ENCODE measurements at regions of chr11 and their contacts with region 1.

Region 1: GRCh38 chr11:13335319-13335718 is 57.7 kb downstream of the BMAL1 start:
- DNase-seq: peak; percentile 88
- ATAC-seq: peak; percentile 34
- H3K4me3 Mint-ChIP-seq: no peak overlapping the region
- H3K27ac Mint-ChIP-seq: peak overlapping the region; percentile 1
- H3K4me1 Mint-ChIP-seq: peaks cover 73% of the 10 kb centered on the region
- H3K27me3 Mint-ChIP-seq: no peaks in the 10 kb centered on the region
- CTCF ChIP-seq: peak; percentile 76

Region 2: DNA sequence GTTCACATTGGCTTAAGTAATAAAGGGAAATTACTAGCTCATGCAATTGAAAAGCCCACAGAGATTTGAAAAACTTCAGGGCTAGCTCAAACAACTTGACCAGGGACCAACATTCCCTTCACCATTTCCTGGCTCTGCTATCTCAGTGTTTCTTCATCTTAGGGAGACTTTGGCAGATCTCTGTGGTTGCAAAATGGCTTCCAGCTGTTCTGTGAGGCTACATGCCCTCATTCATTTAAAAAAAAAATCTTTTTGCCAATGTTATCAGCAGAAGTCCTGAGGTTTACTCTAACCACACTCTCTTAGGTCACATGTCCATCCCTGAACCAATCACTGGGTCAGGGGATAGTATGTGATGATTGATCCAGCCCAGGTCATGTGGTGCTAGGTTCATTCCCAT is 340.1 kb before region 1 on chr11:
- CTCF ChIA-PET with region 1: no interaction called
- POLR2A ChIA-PET with region 1: no interaction called
- intact Hi-C with region 1: no loop called
- DNase-seq: no peak
- ATAC-seq: no peak
- H3K4me3 Mint-ChIP-seq: no peak overlapping the region
- H3K27ac Mint-ChIP-seq: no peak overlapping the region
- H3K4me1 Mint-ChIP-seq: no peaks in the 10 kb centered on the region
- H3K27me3 Mint-ChIP-seq: peaks cover 25% of the 10 kb centered on the region
- CTCF ChIP-seq: no peak

Region 3: GRCh38 chr11:13210424-13210823 is 124.9 kb before region 1 on chr11:
- CTCF ChIA-PET with region 1: interaction called, 55 read pairs
- POLR2A ChIA-PET with region 1: interaction called, 3 read pairs
- intact Hi-C with region 1: loop called (anchors 5 kb)
- DNase-seq: peak; percentile 59
- ATAC-seq: no peak
- H3K4me3 Mint-ChIP-seq: no peak overlapping the region
- H3K27ac Mint-ChIP-seq: no peak overlapping the region
- H3K4me1 Mint-ChIP-seq: peaks cover 30% of the 10 kb centered on the region
- H3K27me3 Mint-ChIP-seq: no peaks in the 10 kb centered on the region
- CTCF ChIP-seq: peak; percentile 47

Region 4: GRCh38 chr11:13249996-13250395 is 85.3 kb before region 1 on chr11:
- CTCF ChIA-PET with region 1: interaction called, 25 read pairs
- POLR2A ChIA-PET with region 1: no interaction called
- intact Hi-C with region 1: loop called (anchors 10 kb)
- DNase-seq: peak; percentile 13
- ATAC-seq: no peak
- H3K4me3 Mint-ChIP-seq: no peak overlapping the region
- H3K27ac Mint-ChIP-seq: no peak overlapping the region
- H3K4me1 Mint-ChIP-seq: no peaks in the 10 kb centered on the region
- H3K27me3 Mint-ChIP-seq: peaks cover 14% of the 10 kb centered on the region
- CTCF ChIP-seq: no peak

Region 5: DNA sequence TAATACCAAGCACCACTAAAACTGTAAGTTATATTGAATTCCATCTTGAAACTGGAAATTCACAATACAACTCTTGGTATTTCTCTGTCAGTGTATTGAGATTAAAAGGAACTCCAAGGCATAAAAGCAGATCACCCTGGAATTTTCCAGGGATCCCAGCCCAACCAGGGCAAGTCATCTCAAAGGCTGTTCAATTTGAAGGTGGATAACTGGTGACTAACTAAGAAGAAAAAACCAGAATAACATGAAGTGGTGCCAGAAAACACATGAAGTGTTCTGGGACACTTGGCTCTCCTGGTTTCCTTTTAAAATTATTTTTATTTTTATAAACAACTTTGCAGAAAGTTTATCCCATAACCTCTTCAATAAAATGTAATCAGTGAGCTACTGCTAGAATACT is 65.5 kb before region 1 on chr11:
- CTCF ChIA-PET with region 1: interaction called, 13 read pairs
- POLR2A ChIA-PET with region 1: no interaction called
- intact Hi-C with region 1: no loop called
- DNase-seq: no peak
- ATAC-seq: no peak
- H3K4me3 Mint-ChIP-seq: no peak overlapping the region
- H3K27ac Mint-ChIP-seq: no peak overlapping the region
- H3K4me1 Mint-ChIP-seq: peaks cover 4% of the 10 kb centered on the region
- H3K27me3 Mint-ChIP-seq: peaks cover 12% of the 10 kb centered on the region
- CTCF ChIP-seq: no peak

Region 6: DNA sequence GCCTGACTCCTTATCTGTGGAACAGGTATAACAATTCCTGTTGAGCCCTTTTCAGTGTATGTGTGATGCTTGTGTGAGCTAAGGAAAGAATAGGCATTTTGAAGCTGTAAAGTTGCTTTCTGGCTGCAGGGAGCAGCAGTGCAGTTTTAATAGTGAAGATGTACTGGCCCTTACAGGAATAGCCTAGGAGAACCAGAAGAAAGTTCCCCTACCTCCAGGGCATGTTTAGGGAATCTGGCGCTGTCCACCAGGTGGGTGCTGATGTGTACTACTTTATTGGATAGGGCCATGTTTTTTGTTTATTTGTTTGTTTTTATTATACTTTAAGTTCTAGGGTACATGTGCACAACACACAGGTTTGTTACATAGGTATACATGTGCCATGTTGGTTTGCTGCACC is 46.2 kb before region 1 on chr11:
- CTCF ChIA-PET with region 1: interaction called, 41 read pairs
- POLR2A ChIA-PET with region 1: interaction called, 7 read pairs
- intact Hi-C with region 1: loop called (anchors 5 kb)
- DNase-seq: no peak
- ATAC-seq: no peak
- H3K4me3 Mint-ChIP-seq: no peak overlapping the region
- H3K27ac Mint-ChIP-seq: peak overlapping the region; percentile 85
- H3K4me1 Mint-ChIP-seq: peaks cover 89% of the 10 kb centered on the region
- H3K27me3 Mint-ChIP-seq: no peaks in the 10 kb centered on the region
- CTCF ChIP-seq: no peak

Region 7: DNA sequence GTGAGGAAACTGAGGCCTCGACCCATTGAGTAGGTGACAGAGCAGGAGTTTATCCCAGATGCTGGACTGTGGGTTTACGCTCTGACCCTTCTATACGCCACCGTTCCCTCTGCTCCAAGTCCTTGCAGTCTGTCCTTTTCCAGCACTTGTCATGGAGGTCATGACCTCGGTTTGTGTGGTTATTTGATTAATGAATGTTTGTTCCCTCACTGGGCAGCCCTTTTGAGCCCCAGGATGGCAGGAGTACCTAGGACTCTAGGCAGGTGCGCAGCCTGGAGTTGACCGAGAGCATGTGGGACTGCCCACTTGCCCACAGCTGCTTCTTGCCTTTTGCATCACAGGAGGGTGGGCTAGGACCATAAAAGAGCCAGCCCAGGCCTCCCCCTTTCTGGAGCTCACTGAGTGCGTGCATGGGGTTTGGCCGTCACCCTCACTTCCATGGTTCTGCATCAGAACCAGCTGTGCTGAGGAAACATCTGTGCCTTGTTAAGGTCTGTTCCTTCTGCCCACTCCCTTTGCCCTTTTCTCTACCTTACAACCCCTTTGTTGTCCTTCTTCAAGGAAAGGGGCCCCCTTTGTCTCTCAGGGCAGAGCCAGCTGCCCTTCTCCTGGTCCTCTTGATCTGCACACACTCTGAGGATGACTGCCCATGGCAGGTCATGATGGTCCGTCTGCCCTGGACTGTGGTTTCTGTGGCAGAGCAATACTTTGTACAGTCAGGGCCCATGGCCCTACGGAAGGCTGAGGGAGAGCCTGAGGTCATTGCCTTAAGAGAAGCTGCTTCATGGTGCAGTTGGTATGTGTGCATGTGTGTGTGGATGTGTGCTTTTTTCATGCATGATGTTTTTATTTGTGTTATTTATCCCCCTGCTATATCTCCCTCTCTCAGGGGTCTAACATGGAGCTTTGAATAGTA is 19.5 kb before region 1 on chr11:
- CTCF ChIA-PET with region 1: interaction called, 18 read pairs
- POLR2A ChIA-PET with region 1: interaction called, 4 read pairs
- intact Hi-C with region 1: no loop called
- DNase-seq: no peak
- ATAC-seq: no peak
- H3K4me3 Mint-ChIP-seq: no peak overlapping the region
- H3K27ac Mint-ChIP-seq: peak overlapping the region; percentile 57
- H3K4me1 Mint-ChIP-seq: peaks cover 76% of the 10 kb centered on the region
- H3K27me3 Mint-ChIP-seq: no peaks in the 10 kb centered on the region
- CTCF ChIP-seq: no peak

Region 8: DNA sequence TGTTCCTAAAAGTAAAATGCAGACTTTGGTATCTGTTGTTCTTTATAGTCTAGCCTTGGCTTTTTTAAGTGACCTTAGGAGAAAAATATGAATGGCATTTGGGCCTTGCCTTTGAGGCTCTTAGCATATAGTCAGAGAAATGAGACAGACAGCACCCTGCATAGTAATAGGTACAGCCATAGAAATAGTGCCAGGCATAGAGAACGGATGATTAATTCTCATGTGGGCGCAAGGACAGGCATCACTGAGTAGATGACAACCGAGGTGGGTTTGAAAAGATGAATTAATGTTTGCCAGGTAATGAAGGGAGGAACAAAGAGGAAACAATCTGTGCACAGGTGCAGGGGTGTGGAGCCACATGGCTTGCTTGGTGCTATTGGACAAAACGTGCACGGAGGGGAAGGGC is 32.7 kb after region 1 on chr11:
- CTCF ChIA-PET with region 1: no interaction called
- POLR2A ChIA-PET with region 1: no interaction called
- intact Hi-C with region 1: no loop called
- DNase-seq: no peak
- ATAC-seq: no peak
- H3K4me3 Mint-ChIP-seq: no peak overlapping the region
- H3K27ac Mint-ChIP-seq: no peak overlapping the region
- H3K4me1 Mint-ChIP-seq: no peaks in the 10 kb centered on the region
- H3K27me3 Mint-ChIP-seq: no peaks in the 10 kb centered on the region
- CTCF ChIP-seq: no peak

Region 9: DNA sequence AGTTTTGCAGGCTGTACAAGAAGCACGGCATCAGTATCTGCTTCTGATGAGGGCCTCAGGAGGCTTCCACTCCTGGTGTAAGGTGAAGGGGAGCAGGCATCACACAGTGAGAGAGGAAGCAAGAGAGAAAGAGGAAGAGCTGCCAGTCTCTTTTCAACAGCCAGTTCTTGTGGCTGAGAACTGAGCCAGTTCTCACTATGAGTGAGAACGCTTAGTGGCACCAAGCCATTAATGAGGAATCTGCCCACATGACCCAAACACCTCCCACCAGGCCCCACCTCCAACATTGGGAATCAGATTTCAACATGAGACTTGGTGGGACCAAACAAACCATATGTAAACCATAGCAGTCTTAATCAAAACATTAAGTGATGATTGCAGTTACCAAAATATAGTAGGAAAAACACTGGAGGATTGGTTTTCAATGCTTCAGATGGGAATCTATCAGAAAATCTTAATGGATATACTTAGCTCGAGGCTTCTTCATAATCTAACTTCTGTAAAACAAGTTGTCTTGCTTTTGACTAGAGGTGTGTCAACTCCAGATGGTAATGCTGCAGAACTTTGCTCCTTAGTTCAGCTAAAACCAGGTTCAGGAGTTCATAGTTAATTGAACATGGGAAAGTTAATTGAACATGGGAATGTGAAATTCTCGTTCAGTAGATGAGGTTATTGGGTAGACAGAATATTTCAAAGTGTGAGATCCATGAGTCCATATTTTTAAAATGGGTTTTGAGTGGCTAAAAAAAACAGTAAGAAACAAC is 345.4 kb after region 1 on chr11:
- CTCF ChIA-PET with region 1: no interaction called
- POLR2A ChIA-PET with region 1: no interaction called
- intact Hi-C with region 1: no loop called
- DNase-seq: no peak
- ATAC-seq: no peak
- H3K4me3 Mint-ChIP-seq: no peak overlapping the region
- H3K27ac Mint-ChIP-seq: no peak overlapping the region
- H3K4me1 Mint-ChIP-seq: peaks cover 44% of the 10 kb centered on the region
- H3K27me3 Mint-ChIP-seq: no peaks in the 10 kb centered on the region
- CTCF ChIP-seq: no peak